Left lung (tissue), 14 donors: ENCODE measurements at regions of chr6 and their contacts with region 1.

Region 1: GRCh38 chr6:74320074-74320473 is 624.1 kb downstream of the CD109 start:
- DNase-seq: no peak
- ATAC-seq: no peak
- H3K4me3 ChIP-seq: no peak overlapping the region
- H3K27ac ChIP-seq: no peak overlapping the region
- H3K4me1 ChIP-seq: no peaks in the 10 kb centered on the region
- H3K27me3 ChIP-seq: no peaks in the 10 kb centered on the region
- CTCF ChIP-seq: no peak

Region 2: DNA sequence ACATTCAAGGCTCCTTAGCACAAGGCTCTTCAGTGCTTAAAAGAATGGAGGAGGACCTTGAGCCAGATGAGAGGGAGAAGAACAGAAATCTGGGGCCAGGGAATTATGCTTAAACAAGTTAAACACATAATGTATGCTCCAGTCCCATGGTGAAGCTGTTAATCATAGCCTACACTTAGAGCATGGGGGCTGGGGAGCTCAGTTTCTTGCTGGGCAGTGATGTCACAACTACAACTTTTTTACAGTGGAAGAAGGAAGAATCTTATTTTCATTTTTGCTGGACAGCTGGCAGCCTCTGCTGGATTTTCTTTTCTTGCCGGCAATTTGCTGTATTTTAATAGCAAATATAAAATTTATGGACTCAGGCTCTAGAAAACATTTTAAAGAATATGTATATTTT is 191.5 kb before region 1 on chr6:
- intact Hi-C with region 1: no loop called
- DNase-seq: no peak
- ATAC-seq: no peak
- H3K4me3 ChIP-seq: no peak overlapping the region
- H3K27ac ChIP-seq: no peak overlapping the region
- H3K4me1 ChIP-seq: no peaks in the 10 kb centered on the region
- H3K27me3 ChIP-seq: no peaks in the 10 kb centered on the region
- CTCF ChIP-seq: no peak

Region 3: DNA sequence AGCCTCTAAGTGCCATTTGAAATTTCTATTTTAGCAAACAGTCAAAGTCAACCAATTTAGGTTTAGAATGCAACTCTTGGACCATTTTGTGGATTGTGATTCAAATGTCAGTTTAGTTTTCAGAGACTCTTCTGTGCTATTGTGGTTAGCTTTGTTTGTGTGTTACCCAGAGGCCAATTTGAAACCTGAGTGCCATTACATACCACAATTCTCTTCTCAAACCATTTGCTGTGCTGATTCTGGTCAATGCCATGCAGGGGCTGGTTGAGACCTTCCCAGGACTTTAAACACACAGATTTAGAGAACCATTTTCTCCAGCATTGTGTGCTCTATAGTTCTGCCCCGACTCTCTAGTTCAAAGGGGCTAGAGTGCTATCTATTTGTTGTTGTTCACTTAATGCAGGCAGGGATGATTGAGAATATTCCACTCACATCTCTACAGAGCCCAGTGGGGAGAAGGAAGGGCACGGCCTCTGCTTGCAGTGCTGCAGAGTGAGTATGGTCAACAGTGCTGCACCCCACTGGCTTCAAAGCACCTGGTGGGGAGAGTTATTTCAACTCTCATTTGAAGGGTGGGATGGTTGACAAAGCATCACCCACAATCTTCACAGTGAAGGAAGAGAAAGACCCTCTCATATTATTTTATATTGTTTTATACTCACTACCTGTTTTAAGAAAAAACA is 147.6 kb after region 1 on chr6:
- intact Hi-C with region 1: loop called in 1 of 2 experiments (anchors 5 kb)
- DNase-seq: no peak
- ATAC-seq: no peak
- H3K4me3 ChIP-seq: no peak overlapping the region
- H3K27ac ChIP-seq: no peak overlapping the region
- H3K4me1 ChIP-seq: no peaks in the 10 kb centered on the region
- H3K27me3 ChIP-seq: no peaks in the 10 kb centered on the region
- CTCF ChIP-seq: no peak